Endothelial cell of umbilical vein (primary cell): ENCODE measurements at regions of chr16 and their contacts with region 1.

Region 1: GRCh38 chr16:24668481-24669061 is 60.9 kb upstream of the TNRC6A start:
- DNase-seq: peak; percentile 87
- H3K4me3 ChIP-seq: no peak overlapping the region
- H3K27ac ChIP-seq: peak overlapping the region; percentile 85
- H3K4me1 ChIP-seq: peaks cover 14% of the 10 kb centered on the region
- H3K27me3 ChIP-seq: no peaks in the 10 kb centered on the region
- CTCF ChIP-seq: no peak
- POLR2A ChIP-seq: no peak

Region 2: GRCh38 chr16:24539291-24539849 is 129.2 kb before region 1 on chr16 and contains the start of gene RBBP6:
- CTCF ChIA-PET with region 1: no interaction called
- POLR2A ChIA-PET with region 1: no interaction called
- dilution Hi-C with region 1: no loop called
- intact Hi-C with region 1: loop called (anchors 1 kb)
- DNase-seq: peak; percentile 98
- H3K4me3 ChIP-seq: peak within 1 kb of the TSS; percentile 80 to 94 (median 88)
- H3K27ac ChIP-seq: peak within 1 kb of the TSS; percentile 96
- H3K4me1 ChIP-seq: peaks cover 36% of the 10 kb centered on the region
- H3K27me3 ChIP-seq: no peaks in the 10 kb centered on the region
- CTCF ChIP-seq: peak in 1 of 2 donors; percentile 28
- POLR2A ChIP-seq: peak; percentile 93
- total RNA-seq, gene RBBP6: 49.2 and 52.1 TPM in 2 replicates

Region 3: DNA sequence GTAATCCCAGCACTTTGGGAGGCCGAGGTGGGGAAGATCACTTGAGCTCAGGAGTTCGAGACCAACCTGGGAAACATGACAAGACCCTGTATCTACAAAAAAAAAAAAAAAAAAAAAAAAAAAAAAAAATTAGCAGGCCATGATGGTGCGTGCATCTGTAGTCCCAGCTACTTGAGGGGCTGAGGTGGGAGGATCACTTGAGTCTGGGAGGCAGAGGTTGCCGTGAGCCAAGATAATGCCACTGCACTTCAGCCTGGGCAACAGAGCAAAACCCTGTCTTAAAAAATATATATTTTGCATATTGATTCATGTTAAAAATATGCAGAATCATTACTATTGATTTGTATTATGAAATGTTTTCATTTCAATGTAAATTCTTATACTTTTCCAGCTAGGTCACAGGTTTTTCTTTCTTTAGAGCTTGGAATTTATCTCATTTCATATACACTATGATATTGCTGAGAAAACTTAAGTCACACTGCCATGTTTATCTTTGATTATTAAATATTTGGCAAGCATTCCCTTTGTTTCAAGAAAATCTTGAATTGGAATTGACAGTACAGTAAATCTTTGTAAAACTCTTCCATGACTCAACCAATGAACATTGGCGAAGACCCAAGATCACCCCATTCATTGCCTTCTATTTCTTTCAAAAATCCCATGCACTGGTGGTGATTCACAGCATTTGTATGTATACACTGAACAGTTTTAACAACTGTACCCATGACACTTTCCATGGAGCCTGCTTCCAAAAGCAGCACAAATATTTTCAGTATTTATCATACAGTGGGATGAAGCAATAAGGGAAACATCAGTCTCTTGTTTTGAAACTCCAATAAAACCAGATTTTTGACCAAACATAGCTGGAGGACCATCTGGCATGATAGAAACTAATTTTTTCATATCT is 22.6 kb before region 1 on chr16:
- CTCF ChIA-PET with region 1: no interaction called
- POLR2A ChIA-PET with region 1: no interaction called
- dilution Hi-C with region 1: no loop called
- intact Hi-C with region 1: loop called (anchors 1 kb)
- DNase-seq: peak; percentile 99
- H3K4me3 ChIP-seq: no peak overlapping the region
- H3K27ac ChIP-seq: peak overlapping the region; percentile 71
- H3K4me1 ChIP-seq: peaks cover 14% of the 10 kb centered on the region
- H3K27me3 ChIP-seq: no peaks in the 10 kb centered on the region
- CTCF ChIP-seq: no peak
- POLR2A ChIP-seq: no peak

Region 4: DNA sequence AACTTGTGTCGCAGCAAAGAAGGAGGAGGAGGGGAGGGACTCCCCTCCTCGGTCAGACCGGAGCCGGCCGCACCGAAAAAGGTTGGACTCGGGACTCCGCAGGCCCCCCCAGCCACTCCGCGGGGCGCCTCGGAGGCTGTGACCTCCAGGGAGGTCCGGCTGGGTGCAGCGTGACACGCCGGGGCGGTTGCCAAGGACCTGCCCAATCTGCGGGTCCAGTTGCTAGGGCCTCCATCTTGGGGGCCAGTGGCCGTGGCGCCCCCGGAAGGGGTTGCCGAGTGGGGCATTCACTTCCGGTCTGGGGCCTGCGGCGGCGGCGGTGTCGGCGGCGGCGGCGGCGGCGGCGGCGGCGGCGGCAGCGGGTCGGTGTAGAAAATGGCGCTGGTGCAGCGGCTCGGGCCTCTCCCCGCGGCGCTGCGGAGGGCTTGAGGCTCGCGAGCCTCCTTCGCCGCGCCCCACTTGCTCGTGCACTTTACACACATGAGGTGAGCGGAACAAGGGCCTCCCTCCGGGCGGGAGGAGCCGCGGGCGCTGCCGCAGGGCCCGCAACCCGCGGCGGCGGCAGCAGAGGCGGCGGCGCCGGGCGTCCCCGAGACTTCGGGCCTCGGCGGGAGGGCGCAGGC is 60.9 kb after region 1 on chr16 and contains the start of gene TNRC6A:
- CTCF ChIA-PET with region 1: no interaction called
- POLR2A ChIA-PET with region 1: interaction called, 4 read pairs
- dilution Hi-C with region 1: no loop called
- intact Hi-C with region 1: loop called (anchors 5 kb)
- DNase-seq: peak; percentile 88
- H3K4me3 ChIP-seq: peak within 1 kb of the TSS; percentile 89 to 98 (median 96)
- H3K27ac ChIP-seq: peak within 1 kb of the TSS; percentile 82
- H3K4me1 ChIP-seq: peaks cover 22% of the 10 kb centered on the region
- H3K27me3 ChIP-seq: no peaks in the 10 kb centered on the region
- CTCF ChIP-seq: no peak
- POLR2A ChIP-seq: peak; percentile 69
- total RNA-seq, gene TNRC6A: 62.7 and 74.5 TPM in 2 replicates